ENCODE measurements at regions of chr22 and their contacts with region 1.

Region 1: GRCh38 chr22:33519071-33519973 is 401.0 kb downstream of the LARGE1 start:
- DNase-seq: no peak
- H3K4me3 Mint-ChIP-seq: no peak overlapping the region
- H3K27ac Mint-ChIP-seq: no peak overlapping the region
- H3K4me1 Mint-ChIP-seq: no peaks in the 10 kb centered on the region
- H3K27me3 Mint-ChIP-seq: no peaks in the 10 kb centered on the region

Region 2: GRCh38 chr22:32971276-32971675 is 548.0 kb before region 1 on chr22:
- intact Hi-C with region 1: no loop called
- DNase-seq: no peak
- H3K4me3 Mint-ChIP-seq: no peak overlapping the region
- H3K27ac Mint-ChIP-seq: no peak overlapping the region
- H3K4me1 Mint-ChIP-seq: no peaks in the 10 kb centered on the region
- H3K27me3 Mint-ChIP-seq: peaks cover 2% of the 10 kb centered on the region

Region 3: DNA sequence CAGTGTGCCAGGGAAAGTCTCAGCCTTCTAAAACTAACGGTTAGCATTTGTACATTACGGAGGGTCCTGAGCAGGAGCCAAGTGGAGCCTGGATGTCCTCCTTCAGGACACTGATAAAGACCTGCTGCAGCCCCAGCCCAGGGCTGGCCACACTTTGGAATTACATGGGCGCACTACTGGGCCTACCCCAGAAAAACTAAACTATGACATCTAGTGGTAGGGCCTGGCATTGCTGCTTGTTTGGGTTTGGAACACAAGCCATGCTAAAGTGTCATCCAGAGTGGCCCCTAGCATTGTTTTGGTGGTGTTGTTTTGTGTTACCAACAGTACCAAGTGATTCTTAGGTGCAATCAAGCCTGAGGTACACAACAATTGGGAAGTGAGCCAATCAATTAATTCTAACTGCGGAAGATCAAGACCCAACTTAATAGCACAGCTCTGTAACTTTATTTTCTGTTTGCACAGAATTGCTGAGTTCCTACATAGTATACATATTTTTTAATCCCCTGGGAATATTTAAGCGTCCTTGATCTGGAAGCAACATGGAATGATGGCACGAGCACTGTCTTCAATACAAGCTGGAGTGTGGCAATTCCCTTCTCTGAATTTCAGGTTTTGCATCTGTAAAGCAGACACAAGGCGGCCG is 60.2 kb after region 1 on chr22:
- intact Hi-C with region 1: loop called (anchors 1 kb)
- DNase-seq: peak; percentile 13
- H3K4me3 Mint-ChIP-seq: no peak overlapping the region
- H3K27ac Mint-ChIP-seq: no peak overlapping the region
- H3K4me1 Mint-ChIP-seq: no peaks in the 10 kb centered on the region
- H3K27me3 Mint-ChIP-seq: no peaks in the 10 kb centered on the region

Region 4: DNA sequence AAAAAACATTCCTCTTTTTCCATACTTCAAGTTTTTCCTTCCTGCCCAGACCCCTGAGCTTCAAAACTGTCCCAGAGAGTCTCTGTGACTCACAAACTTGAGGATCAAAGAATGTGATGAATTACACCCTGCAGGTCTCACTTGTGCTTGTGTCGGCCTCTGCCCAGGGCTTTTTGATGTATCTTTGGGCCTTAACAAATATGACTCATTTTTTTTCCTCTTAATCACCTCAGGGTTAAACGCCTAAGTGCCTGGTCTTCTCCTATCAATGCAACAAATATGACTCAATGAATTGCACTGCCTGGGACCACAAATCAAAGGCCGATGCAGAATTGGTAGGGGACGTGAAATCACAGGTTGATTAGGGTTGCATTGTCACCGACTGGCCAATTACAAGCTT is 133.3 kb after region 1 on chr22:
- intact Hi-C with region 1: no loop called
- DNase-seq: no peak
- H3K4me3 Mint-ChIP-seq: no peak overlapping the region
- H3K27ac Mint-ChIP-seq: no peak overlapping the region
- H3K4me1 Mint-ChIP-seq: no peaks in the 10 kb centered on the region
- H3K27me3 Mint-ChIP-seq: no peaks in the 10 kb centered on the region

Measured in activated T-helper 1 cell treated with anti-CD3 and anti-CD28 coated beads, Interleukin-12 subunit alpha, Interleukin-12 subunit beta, Interleukin-2, Interleukin-4 antibody, amounts not matched to agents 30 ng/mL and 10 ng/mL and 1 ng/mL, durations not matched to agents 14 hours and 24 hours and 36 hours (primary cell).